ENCODE measurements at regions of chr3 and their contacts with region 1.

Region 1: GRCh38 chr3:141561426-141562034 is 74.7 kb downstream of the RASA2 start:
- DNase-seq: peak; percentile 85
- H3K4me3 ChIP-seq: no peak overlapping the region
- H3K27ac ChIP-seq: no peak overlapping the region
- H3K4me1 ChIP-seq: peaks cover 15% of the 10 kb centered on the region
- H3K27me3 ChIP-seq: no peaks in the 10 kb centered on the region
- CTCF ChIP-seq: peak; percentile 72 to 75
- POLR2A ChIP-seq: no peak

Region 2: DNA sequence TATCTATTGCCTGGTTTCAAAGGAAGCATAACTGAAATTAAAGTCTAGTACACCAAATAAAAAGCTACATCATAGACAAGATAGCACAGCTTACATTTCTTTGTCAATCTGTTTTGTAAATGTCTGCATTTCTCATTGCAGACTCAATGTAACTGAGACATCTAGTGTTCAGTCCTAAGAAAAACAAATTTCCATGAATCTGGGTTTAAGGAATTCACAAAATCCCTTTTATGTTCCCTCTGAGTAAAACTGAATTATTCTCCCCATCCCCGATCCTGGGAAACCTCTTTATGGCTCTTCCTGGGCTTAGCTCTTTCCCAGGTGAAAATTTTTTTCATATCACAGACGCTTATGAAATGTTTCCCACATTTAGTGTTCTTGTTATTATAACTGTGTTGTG is 96.3 kb before region 1 on chr3:
- CTCF ChIA-PET with region 1: interaction called, 222 read pairs
- POLR2A ChIA-PET with region 1: no interaction called
- dilution Hi-C with region 1: no loop called
- intact Hi-C with region 1: loop called (anchors 1 kb)
- DNase-seq: no peak
- H3K4me3 ChIP-seq: no peak overlapping the region
- H3K27ac ChIP-seq: no peak overlapping the region
- H3K4me1 ChIP-seq: no peaks in the 10 kb centered on the region
- H3K27me3 ChIP-seq: no peaks in the 10 kb centered on the region
- CTCF ChIP-seq: no peak
- POLR2A ChIP-seq: no peak

Region 3: GRCh38 chr3:141477224-141477623 is 84.3 kb before region 1 on chr3:
- CTCF ChIA-PET with region 1: interaction called, 69 read pairs
- POLR2A ChIA-PET with region 1: no interaction called
- dilution Hi-C with region 1: no loop called
- intact Hi-C with region 1: loop called (anchors 1 kb)
- DNase-seq: peak; percentile 82
- H3K4me3 ChIP-seq: no peak overlapping the region
- H3K27ac ChIP-seq: peak overlapping the region; percentile 48
- H3K4me1 ChIP-seq: peaks cover 9% of the 10 kb centered on the region
- H3K27me3 ChIP-seq: no peaks in the 10 kb centered on the region
- CTCF ChIP-seq: no peak
- POLR2A ChIP-seq: no peak

Region 4: DNA sequence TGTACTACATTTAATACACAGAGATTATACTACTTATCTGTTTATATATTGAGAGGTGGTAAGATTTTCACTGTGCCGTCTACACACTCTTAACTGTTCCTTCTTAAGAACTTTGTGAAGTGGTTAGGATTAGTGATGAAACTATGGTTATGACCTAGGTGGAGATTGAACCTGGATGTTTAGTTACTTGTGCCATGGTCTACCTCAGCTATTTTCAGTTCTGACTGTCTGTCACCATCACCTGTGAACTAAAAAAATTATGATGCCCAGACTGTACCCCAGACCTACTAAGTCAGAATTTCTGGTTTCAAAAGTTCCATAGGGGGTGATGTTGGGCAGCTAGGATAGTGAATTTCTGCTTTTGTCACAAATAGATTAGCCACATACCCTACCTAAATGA is 68.3 kb before region 1 on chr3:
- CTCF ChIA-PET with region 1: interaction called, 20 read pairs
- POLR2A ChIA-PET with region 1: no interaction called
- dilution Hi-C with region 1: no loop called
- intact Hi-C with region 1: no loop called
- DNase-seq: no peak
- H3K4me3 ChIP-seq: no peak overlapping the region
- H3K27ac ChIP-seq: no peak overlapping the region
- H3K4me1 ChIP-seq: peaks cover 27% of the 10 kb centered on the region
- H3K27me3 ChIP-seq: no peaks in the 10 kb centered on the region
- CTCF ChIP-seq: no peak
- POLR2A ChIP-seq: no peak

Region 5: GRCh38 chr3:141538568-141539240 is 22.8 kb before region 1 on chr3:
- CTCF ChIA-PET with region 1: interaction called, 3 read pairs
- POLR2A ChIA-PET with region 1: no interaction called
- dilution Hi-C with region 1: no loop called
- intact Hi-C with region 1: loop called (anchors 2 kb)
- DNase-seq: peak; percentile 44
- H3K4me3 ChIP-seq: no peak overlapping the region
- H3K27ac ChIP-seq: peak overlapping the region; percentile 12
- H3K4me1 ChIP-seq: peaks cover 25% of the 10 kb centered on the region
- H3K27me3 ChIP-seq: no peaks in the 10 kb centered on the region
- CTCF ChIP-seq: no peak
- POLR2A ChIP-seq: no peak

Region 6: DNA sequence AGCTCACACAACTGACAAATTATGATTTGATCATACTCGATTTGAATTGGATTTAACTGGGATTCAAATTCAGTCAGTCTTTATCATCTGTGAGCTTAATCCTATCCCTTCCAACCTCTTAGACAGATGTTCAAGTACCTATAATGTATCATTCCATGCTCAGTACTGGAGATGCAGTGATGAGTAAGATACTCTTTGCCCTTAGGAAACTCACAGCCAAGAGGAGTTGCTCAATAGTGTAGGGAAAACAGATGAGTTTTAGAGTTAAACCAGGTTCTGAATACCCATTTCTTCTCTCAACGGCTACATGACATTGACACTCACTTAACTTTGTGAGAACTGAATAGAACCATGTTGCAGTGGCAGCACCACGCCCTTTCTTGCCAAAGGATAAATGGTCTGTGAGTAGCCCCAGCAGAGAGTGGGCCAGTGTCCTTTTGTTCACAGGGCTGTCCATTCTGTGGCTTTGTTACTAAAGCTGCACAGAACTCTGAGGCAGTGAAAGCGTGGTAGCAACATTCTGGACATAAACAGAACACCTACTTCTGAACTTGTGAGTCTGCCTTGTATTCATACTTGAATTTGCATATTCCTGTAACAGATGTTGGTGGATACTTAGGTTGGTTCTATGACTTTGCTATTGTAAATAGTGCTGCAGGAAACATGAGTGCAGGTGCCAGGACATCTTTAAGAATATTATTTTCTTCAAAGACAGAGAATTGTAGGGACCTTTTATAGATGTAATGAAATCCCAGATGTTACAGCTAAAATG is 16.9 kb after region 1 on chr3:
- CTCF ChIA-PET with region 1: no interaction called
- POLR2A ChIA-PET with region 1: no interaction called
- dilution Hi-C with region 1: no loop called
- intact Hi-C with region 1: no loop called
- DNase-seq: no peak
- H3K4me3 ChIP-seq: no peak overlapping the region
- H3K27ac ChIP-seq: no peak overlapping the region
- H3K4me1 ChIP-seq: no peaks in the 10 kb centered on the region
- H3K27me3 ChIP-seq: no peaks in the 10 kb centered on the region
- CTCF ChIP-seq: no peak
- POLR2A ChIP-seq: no peak